OCI-LY7 (cell line): ENCODE measurements at regions of chrX and their contacts with region 1.

Region 1: GRCh38 chrX:24054182-24055042 is at the start of gene EIF2S3:
- DNase-seq: peak; percentile 94
- H3K4me3 ChIP-seq: no peak within 1 kb of the TSS
- H3K27ac ChIP-seq: no peak within 1 kb of the TSS
- H3K4me1 ChIP-seq: peaks cover 11% of the 10 kb centered on the region
- CTCF ChIP-seq: peak; percentile 79
- total RNA-seq, gene EIF2S3: 231 and 243 TPM in 2 replicates

Region 2: DNA sequence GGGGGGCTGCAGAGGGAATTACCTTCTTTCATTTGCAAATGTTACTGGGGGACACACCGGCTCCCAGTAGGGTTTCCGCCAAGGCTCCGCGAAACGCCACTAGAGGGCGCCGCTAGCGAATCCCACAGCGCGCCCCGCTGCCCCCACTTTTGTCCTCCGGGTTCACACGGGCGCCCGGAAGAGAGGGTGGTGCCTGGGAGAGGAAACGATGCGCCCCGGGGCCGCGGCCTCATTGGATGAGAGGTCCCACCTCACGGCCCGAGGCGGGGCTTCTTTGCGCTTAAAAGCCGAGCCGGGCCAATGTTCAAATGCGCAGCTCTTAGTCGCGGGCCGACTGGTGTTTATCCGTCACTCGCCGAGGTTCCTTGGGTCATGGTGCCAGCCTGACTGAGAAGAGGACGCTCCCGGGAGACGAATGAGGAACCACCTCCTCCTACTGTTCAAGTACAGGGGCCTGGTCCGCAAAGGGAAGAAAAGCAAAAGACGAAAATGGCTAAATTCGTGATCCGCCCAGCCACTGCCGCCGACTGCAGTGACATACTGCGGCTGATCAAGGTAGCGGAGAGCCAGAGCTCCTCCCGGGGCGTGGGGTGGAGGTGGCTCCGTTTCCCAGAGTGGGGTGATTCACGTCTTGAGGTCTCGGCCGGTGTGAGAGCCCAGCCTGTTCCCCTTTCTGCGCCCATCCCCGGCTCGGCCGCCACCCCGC is 271.4 kb before region 1 on chrX and contains the start of gene SAT1:
- CTCF ChIA-PET with region 1: no interaction called
- POLR2A ChIA-PET with region 1: interaction called, 6 read pairs
- intact Hi-C with region 1: loop called (anchors 2 kb)
- DNase-seq: peak; percentile 95
- H3K4me3 ChIP-seq: peak within 1 kb of the TSS; percentile 89
- H3K27ac ChIP-seq: peak within 1 kb of the TSS; percentile 59
- H3K4me1 ChIP-seq: peaks cover 26% of the 10 kb centered on the region
- CTCF ChIP-seq: peak; percentile 81
- total RNA-seq, gene SAT1: 46.9 and 75.9 TPM in 2 replicates

Region 3: GRCh38 chrX:23959781-23960180 is 94.6 kb before region 1 on chrX:
- CTCF ChIA-PET with region 1: no interaction called
- POLR2A ChIA-PET with region 1: no interaction called
- intact Hi-C with region 1: no loop called
- DNase-seq: no peak
- H3K4me3 ChIP-seq: no peak overlapping the region
- H3K27ac ChIP-seq: no peak overlapping the region
- H3K4me1 ChIP-seq: no peaks in the 10 kb centered on the region
- CTCF ChIP-seq: no peak

Region 4: DNA sequence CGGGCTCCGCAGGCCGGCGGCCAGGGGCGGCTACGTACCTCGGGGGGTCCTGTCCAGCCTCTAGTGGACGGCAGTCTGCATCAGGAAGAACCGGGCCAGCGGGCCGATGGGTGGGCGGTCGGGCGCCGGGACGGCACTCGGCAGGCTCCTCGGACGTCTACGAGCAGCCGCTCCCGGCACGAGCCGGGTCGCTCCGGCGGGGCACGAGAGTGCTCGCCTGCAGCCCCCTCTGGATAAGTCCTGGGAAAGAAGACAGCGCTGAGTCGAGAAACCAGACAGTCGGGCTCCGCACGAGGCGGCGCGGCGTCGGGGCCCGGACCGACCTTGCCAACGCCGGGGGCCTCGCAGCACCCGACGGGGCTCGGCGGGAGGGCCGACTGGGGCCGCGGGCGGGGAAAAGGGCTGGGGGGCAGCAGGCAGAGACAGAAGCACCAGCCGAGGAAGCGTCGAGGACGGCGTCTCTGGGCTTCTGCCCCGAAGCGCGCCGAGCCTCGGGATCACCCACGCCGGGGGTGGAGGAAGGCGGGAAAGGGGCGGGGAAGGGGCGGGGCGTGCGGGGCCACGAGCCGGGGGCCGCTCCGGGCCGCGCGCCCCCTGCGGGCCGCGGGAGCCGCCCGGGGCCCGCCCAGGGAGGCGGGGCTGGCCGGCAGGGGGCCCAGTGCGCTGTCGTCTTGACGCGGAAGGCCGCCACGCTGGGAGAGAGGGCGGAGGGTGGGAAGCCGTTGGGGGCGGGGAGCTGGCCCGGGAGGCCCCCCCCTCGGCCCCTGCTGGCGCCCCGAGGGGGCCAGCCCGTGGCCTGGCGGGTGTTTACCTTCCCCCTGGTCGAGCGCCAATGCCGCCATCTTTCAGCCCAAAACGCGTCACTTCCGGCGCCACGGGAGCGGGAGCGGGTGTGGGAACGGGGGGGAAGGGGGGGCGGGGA is 29.3 kb before region 1 on chrX:
- CTCF ChIA-PET with region 1: interaction called, 9 read pairs
- POLR2A ChIA-PET with region 1: interaction called, 26 read pairs
- intact Hi-C with region 1: loop called (anchors 1 kb)
- DNase-seq: peak; percentile 88
- H3K4me3 ChIP-seq: peak overlapping the region; percentile 94
- H3K27ac ChIP-seq: peak overlapping the region; percentile 78
- H3K4me1 ChIP-seq: peaks cover 27% of the 10 kb centered on the region
- CTCF ChIP-seq: 0 out of 2 replicates have a peak, but pooled peaks have one; percentile 2

Region 5: GRCh38 chrX:24215272-24215671 is 160.9 kb after region 1 on chrX:
- CTCF ChIA-PET with region 1: no interaction called
- POLR2A ChIA-PET with region 1: no interaction called
- intact Hi-C with region 1: no loop called
- DNase-seq: no peak
- H3K4me3 ChIP-seq: no peak overlapping the region
- H3K27ac ChIP-seq: no peak overlapping the region
- H3K4me1 ChIP-seq: no peaks in the 10 kb centered on the region
- CTCF ChIP-seq: no peak

Region 6: DNA sequence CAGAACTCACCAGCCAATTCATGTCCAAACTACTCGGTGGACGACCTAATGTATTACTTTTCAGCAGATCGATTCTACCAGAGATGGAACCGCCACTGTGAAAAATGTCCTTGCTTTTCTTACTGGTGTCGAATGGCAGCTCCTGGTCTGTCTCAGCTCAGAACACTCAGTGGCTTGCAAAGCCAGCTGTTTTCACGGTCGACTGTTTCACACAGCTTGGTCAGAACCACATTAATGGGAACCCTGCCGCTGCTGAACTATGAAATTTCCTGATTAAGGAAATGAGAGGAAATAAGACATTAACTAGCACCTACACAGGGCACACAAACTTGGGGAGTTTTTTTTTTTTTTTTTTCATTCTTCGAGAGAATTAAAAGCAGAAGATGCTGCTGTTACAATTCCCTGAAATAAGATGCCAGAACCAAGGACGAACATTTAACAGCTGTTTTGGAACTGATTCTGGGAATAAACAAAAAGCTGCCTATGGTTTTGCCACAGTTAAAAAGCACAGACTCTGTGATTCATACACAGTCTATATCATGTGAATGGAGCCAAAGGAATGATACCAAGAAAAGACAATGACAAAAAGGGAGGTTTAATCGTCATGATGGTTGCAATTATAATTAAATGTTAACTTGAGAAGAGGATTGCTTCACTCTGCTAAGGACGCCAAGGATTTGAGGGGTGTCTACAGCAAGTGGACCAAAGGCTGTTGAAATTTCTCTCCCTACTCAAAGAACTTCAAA is 228.1 kb after region 1 on chrX:
- CTCF ChIA-PET with region 1: no interaction called
- POLR2A ChIA-PET with region 1: no interaction called
- intact Hi-C with region 1: no loop called
- DNase-seq: peak; percentile 11
- H3K4me3 ChIP-seq: no peak overlapping the region
- H3K27ac ChIP-seq: no peak overlapping the region
- H3K4me1 ChIP-seq: peaks cover 5% of the 10 kb centered on the region
- CTCF ChIP-seq: no peak

Region 7: DNA sequence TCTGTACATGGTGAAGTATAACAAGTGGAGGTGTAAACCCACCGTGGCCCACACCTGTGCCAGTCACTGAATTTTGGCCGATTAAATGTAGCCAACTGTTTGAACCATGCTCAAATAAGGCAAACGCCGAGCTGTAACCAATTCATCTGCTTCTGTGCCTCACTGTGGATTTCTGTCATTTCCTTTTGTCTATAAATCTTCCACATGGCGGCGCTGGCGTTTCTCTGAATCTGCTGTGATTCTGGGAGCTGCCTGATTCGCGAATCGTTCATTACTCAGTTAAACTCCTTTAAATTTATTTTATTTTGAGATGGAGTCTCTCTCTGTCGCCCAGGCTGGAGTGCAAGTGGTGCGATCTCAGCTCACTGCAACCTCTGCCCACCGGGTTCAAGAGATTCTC is 240.2 kb after region 1 on chrX:
- CTCF ChIA-PET with region 1: no interaction called
- POLR2A ChIA-PET with region 1: no interaction called
- intact Hi-C with region 1: no loop called
- DNase-seq: peak; percentile 16
- H3K4me3 ChIP-seq: no peak overlapping the region
- H3K27ac ChIP-seq: no peak overlapping the region
- H3K4me1 ChIP-seq: no peaks in the 10 kb centered on the region
- CTCF ChIP-seq: peak; percentile 53